ENCODE measurements at regions of chr17 and their contacts with region 1.

Region 1: GRCh38 chr17:12020642-12021622 is at the start of gene MAP2K4:
- DNase-seq: peak; percentile 90
- H3K4me3 Mint-ChIP-seq: peak within 1 kb of the TSS; percentile 75
- H3K27ac Mint-ChIP-seq: peak within 1 kb of the TSS; percentile 85
- H3K4me1 Mint-ChIP-seq: peaks cover 34% of the 10 kb centered on the region
- H3K27me3 Mint-ChIP-seq: peaks cover 5% of the 10 kb centered on the region
- total RNA-seq, gene MAP2K4: 26.0 to 27.3 TPM

Region 2: DNA sequence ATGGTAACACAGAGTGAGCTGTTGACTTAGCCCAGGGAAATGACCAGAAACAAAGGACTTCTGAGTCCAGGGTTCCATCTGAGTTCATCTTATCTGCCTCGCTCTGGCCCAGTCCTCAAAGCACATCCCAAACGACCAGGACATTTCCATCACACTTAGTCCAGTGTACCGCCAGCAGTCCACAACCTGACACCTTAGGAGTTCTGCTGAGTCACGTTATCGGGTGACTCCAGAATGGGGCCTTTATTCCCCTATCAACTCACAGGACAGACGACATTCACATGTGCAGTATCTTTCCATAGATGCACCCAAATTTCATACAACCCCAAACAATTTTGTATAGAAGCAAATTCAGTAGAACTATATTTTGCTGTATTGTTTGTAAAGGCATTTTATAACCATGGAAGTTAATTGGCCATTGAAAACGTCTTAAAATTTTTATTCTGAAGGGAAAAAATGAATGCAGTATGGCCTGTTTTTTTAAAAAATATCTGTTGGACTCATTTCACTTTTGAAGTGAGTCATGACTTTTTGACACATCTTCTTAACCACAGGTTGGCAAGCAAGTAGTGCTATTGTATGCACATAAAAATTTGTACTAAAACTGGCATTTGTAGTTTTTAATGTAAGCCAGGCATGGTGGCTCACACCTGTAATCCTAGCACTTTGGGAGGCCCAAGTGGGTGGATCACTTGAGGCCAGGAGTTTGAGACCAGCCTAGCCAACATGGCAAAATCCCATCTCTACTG is 70.0 kb before region 1 on chr17:
- CTCF ChIA-PET with region 1: no interaction called
- POLR2A ChIA-PET with region 1: no interaction called
- DNase-seq: no peak
- H3K4me3 Mint-ChIP-seq: no peak overlapping the region
- H3K27ac Mint-ChIP-seq: no peak overlapping the region
- H3K4me1 Mint-ChIP-seq: no peaks in the 10 kb centered on the region
- H3K27me3 Mint-ChIP-seq: no peaks in the 10 kb centered on the region

Region 3: GRCh38 chr17:11997147-11997846 is 23.6 kb before region 1 on chr17 and contains the start of gene ZNF18:
- CTCF ChIA-PET with region 1: interaction called, 6 read pairs
- POLR2A ChIA-PET with region 1: interaction called, 15 read pairs
- DNase-seq: peak; percentile 94
- H3K4me3 Mint-ChIP-seq: peak within 1 kb of the TSS; percentile 88
- H3K27ac Mint-ChIP-seq: peak within 1 kb of the TSS; percentile 95
- H3K4me1 Mint-ChIP-seq: peaks cover 16% of the 10 kb centered on the region
- H3K27me3 Mint-ChIP-seq: no peaks in the 10 kb centered on the region
- total RNA-seq, gene ZNF18: 10.0 to 10.1 TPM